Posterior vena cava (tissue), 2 donors: ENCODE measurements at regions of chr15 and their contacts with region 1.

Region 1: DNA sequence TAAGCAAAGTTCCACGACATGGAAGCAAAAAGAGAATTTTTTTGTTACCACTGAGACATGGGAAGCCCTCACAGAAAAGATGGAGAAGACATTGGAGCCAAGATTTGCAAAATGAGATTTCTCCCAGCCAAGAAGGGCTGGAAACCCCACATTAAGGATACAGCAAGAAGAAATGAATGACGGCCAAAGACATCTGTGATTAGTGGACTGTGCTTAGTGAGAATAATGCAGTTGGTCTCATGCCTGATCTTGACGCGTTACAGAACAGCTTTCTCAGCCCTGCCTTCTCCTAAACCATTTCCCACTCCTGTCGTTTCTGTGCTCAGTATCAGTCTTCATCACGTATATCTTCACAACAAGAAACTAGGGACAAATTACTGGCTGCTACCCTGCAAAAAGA is 45.8 kb upstream of the ARRDC4 start:
- DNase-seq: no peak

Region 2: DNA sequence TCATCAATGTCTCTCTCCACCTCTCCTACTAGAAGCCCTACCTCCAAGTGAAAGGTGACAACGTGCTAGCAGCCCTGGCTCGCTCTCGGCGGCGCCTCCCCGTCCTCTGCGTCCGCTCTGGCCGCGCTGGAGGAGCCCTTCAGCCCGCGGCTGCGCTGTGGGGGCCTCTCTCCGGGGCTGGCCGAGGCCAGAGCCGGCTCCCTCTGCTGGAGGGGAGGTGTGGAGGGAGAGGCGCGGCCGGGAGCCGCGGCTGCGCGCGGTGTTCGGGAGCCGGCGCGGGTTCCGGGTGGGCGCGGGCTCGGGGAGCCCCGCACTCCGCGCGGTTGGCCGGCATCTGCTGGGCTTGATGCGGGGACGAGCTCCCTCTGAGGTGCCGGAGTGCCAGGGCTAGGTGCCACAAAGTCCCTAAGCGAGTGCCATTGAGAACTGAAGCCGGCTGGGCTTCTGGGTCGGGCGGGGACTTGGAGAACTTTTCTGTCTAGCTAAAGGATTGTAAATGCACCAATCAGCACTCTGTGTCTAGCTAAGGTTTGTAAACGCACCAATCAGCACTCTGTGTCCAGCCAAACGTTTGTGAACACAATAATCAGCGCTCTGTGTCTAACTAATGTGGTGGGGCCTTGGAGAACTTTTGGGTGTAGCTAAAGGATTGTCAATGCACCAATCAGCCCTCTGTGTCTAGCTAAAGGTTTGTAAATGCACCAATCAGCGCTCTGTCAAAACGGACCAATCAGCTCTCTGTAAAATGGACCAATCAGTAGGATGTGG is 39.0 kb before region 1 on chr15:
- intact Hi-C with region 1: no loop called
- DNase-seq: no peak

Region 3: GRCh38 chr15:98085003-98085639 is 170.4 kb after region 1 on chr15:
- intact Hi-C with region 1: loop called in 1 of 2 experiments (anchors 5 kb)
- DNase-seq: no peak